Activated B cell treated with CpG ODN at 0.5 μM for 24 hours (primary cell): ENCODE measurements at regions of chr14 and their contacts with region 1.

Region 1: DNA sequence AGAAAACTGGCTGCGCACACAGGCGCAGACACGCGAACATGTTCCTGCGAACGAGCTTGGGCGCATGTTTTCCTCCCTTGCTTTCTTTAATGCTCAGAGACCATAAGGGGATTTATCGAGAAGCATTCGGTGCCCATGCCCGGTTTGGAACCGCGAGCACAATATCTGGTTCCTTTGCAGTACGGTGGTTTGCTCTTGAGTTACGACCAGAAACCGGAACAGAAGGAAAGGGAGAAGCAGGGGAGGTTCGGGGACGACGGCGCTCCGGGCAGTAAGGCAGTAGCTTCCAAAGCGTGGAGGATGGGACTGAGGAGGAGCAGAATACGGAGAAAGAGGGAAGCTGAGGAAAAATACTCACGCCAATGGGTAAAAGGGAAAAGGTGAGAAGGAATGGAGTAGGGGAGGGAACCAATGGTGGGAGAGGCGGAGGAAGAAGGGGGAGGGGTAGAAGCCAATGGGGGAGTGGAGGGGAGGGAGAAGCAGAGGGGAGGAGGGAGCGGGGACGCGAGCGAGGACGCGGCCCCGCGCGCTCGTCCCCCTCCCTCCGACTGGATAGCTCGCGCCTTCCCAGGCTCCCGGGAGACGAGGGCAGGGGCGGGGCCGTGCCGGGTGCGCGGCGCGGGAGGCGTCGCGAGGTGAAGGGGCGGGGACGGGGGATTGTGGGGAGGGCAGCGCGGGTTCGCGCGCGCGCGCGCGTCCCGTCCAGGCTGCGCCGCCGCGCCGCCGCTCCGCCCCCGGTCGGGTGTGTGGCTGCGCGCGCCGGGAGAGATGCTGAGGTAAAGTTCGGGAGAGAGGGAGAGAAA is 625 bp upstream of the ARHGAP5 start:
- DNase-seq: peak; percentile 82
- ATAC-seq: peak; percentile 68
- H3K4me3 Mint-ChIP-seq: peak overlapping the region; percentile 93
- H3K27ac Mint-ChIP-seq: peak overlapping the region; percentile 98
- H3K4me1 Mint-ChIP-seq: peaks cover 33% of the 10 kb centered on the region
- H3K27me3 Mint-ChIP-seq: no peaks in the 10 kb centered on the region
- CTCF ChIP-seq: no peak

Region 2: GRCh38 chr14:30621940-30622830 is 1454.3 kb before region 1 on chr14 and contains the start of gene SCFD1:
- CTCF ChIA-PET with region 1: no interaction called
- POLR2A ChIA-PET with region 1: interaction called, 4 read pairs
- intact Hi-C with region 1: loop called (anchors 1 kb)
- DNase-seq: peak; percentile 92
- ATAC-seq: peak; percentile 97
- H3K4me3 Mint-ChIP-seq: peak within 1 kb of the TSS; percentile 93
- H3K27ac Mint-ChIP-seq: peak within 1 kb of the TSS; percentile 93
- H3K4me1 Mint-ChIP-seq: peaks cover 47% of the 10 kb centered on the region
- H3K27me3 Mint-ChIP-seq: no peaks in the 10 kb centered on the region
- CTCF ChIP-seq: no peak
- total RNA-seq, gene SCFD1: 70.1 and 83.6 TPM in 2 replicates

Region 3: GRCh38 chr14:31207755-31208545 is 868.5 kb before region 1 on chr14 and contains the start of gene HECTD1:
- CTCF ChIA-PET with region 1: no interaction called
- POLR2A ChIA-PET with region 1: no interaction called
- intact Hi-C with region 1: loop called (anchors 5 kb)
- DNase-seq: no peak
- ATAC-seq: peak; percentile 82
- H3K4me3 Mint-ChIP-seq: peak within 1 kb of the TSS; percentile 96
- H3K27ac Mint-ChIP-seq: peak within 1 kb of the TSS; percentile 99
- H3K4me1 Mint-ChIP-seq: peaks cover 39% of the 10 kb centered on the region
- H3K27me3 Mint-ChIP-seq: no peaks in the 10 kb centered on the region
- CTCF ChIP-seq: no peak
- total RNA-seq, gene HECTD1: 139 and 163 TPM in 2 replicates

Region 4: DNA sequence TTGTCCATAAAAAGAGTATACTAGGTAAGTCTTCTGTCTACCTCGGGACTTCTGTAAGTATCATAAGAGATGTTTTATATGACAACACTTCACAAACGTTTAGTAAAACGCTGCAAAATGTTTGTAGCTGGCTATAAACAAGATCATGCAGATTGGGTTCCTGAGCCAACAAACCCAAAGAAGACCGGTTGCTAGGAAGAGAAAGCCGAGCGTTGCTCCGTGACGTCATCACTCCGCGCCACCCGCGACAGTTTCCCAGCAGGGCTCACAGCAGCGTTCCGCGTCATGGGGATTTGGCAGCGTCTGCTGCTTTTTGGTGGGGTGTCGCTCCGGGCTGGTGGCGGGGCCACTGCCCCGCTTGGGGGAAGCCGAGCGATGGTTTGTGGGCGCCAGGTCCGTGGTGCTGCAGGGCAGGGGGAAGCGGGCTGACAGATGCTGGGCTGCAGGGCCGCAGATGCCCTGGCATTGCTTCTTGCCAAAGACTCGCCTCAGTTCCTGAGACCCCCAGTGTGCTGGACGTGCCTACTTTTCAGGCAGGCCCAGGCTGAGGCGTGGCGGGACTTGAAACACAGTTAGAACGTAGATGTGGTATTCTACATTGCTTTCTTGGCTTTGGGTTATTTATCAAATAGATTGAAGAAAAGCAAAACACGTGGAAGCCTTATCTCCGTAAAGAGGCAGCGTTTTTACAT is 515.2 kb before region 1 on chr14 and contains the start of gene NUBPL:
- CTCF ChIA-PET with region 1: no interaction called
- POLR2A ChIA-PET with region 1: no interaction called
- intact Hi-C with region 1: loop called (anchors 1 kb)
- DNase-seq: peak; percentile 97
- ATAC-seq: peak; percentile 92
- H3K4me3 Mint-ChIP-seq: peak within 1 kb of the TSS; percentile 97
- H3K27ac Mint-ChIP-seq: peak within 1 kb of the TSS; percentile 97
- H3K4me1 Mint-ChIP-seq: peaks cover 24% of the 10 kb centered on the region
- H3K27me3 Mint-ChIP-seq: peaks cover 6% of the 10 kb centered on the region
- CTCF ChIP-seq: no peak
- total RNA-seq, gene NUBPL: 11.7 and 11.9 TPM in 2 replicates

Region 5: GRCh38 chr14:31994391-31995033 is 82.0 kb before region 1 on chr14:
- CTCF ChIA-PET with region 1: no interaction called
- POLR2A ChIA-PET with region 1: no interaction called
- intact Hi-C with region 1: no loop called
- DNase-seq: no peak
- ATAC-seq: no peak
- H3K4me3 Mint-ChIP-seq: no peak overlapping the region
- H3K27ac Mint-ChIP-seq: no peak overlapping the region
- H3K4me1 Mint-ChIP-seq: no peaks in the 10 kb centered on the region
- H3K27me3 Mint-ChIP-seq: peaks cover 5% of the 10 kb centered on the region
- CTCF ChIP-seq: no peak

Region 6: GRCh38 chr14:32099473-32099872 is 23.0 kb after region 1 on chr14:
- CTCF ChIA-PET with region 1: interaction called, 5 read pairs
- POLR2A ChIA-PET with region 1: no interaction called
- intact Hi-C with region 1: loop called (anchors 2 kb)
- DNase-seq: no peak
- ATAC-seq: no peak
- H3K4me3 Mint-ChIP-seq: no peak overlapping the region
- H3K27ac Mint-ChIP-seq: no peak overlapping the region
- H3K4me1 Mint-ChIP-seq: peaks cover 25% of the 10 kb centered on the region
- H3K27me3 Mint-ChIP-seq: no peaks in the 10 kb centered on the region
- CTCF ChIP-seq: no peak

Region 7: DNA sequence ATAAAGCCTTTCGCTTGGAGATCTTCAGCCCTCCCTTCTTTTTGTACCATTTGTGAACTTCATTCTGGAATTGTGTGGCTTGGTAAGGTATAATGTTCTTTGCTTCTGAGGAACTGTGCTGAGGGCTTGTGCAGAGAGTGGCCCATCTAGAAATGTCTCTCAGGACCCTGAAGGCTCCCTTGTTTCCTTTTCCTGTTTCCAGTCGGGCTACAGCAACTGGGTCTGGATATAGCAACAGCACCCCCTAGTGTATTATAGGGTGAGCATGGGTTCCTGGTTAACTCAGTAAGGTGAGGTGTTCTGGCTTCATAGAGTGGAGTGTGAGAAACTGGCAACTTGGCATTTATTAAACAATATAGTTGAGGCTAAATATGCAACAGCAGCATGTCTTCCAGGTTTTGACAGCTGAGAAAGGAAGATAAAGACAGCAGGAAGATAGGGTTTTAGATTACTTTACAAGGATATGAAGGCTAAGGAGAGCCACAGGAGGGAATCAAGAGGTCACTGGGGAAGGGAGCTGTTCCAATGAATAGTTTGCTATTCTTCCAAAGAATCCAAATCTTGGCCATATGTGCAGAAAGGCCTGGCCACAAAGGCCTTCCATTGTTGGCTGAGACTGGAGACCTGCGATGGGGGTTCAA is 175.7 kb after region 1 on chr14:
- CTCF ChIA-PET with region 1: interaction called, 142 read pairs
- POLR2A ChIA-PET with region 1: interaction called, 5 read pairs
- intact Hi-C with region 1: loop called (anchors 1 kb)
- DNase-seq: no peak
- ATAC-seq: peak; percentile 88
- H3K4me3 Mint-ChIP-seq: no peak overlapping the region
- H3K27ac Mint-ChIP-seq: no peak overlapping the region
- H3K4me1 Mint-ChIP-seq: no peaks in the 10 kb centered on the region
- H3K27me3 Mint-ChIP-seq: no peaks in the 10 kb centered on the region
- CTCF ChIP-seq: peak; percentile 46